Activated CD8-positive, alpha-beta T cell treated with anti-CD3 and anti-CD28 coated beads for 36 hours (primary cell): ENCODE measurements at regions of chr1 and their contacts with region 1.

Region 1: GRCh38 chr1:20640183-20640597 is 6.9 kb downstream of the PINK1 start:
- DNase-seq: peak; percentile 79
- ATAC-seq: peak; percentile 90
- H3K4me3 Mint-ChIP-seq: no peak overlapping the region
- H3K27ac Mint-ChIP-seq: no peak overlapping the region
- H3K4me1 Mint-ChIP-seq: no peaks in the 10 kb centered on the region
- H3K27me3 Mint-ChIP-seq: no peaks in the 10 kb centered on the region
- CTCF ChIP-seq: peak; percentile 80

Region 2: DNA sequence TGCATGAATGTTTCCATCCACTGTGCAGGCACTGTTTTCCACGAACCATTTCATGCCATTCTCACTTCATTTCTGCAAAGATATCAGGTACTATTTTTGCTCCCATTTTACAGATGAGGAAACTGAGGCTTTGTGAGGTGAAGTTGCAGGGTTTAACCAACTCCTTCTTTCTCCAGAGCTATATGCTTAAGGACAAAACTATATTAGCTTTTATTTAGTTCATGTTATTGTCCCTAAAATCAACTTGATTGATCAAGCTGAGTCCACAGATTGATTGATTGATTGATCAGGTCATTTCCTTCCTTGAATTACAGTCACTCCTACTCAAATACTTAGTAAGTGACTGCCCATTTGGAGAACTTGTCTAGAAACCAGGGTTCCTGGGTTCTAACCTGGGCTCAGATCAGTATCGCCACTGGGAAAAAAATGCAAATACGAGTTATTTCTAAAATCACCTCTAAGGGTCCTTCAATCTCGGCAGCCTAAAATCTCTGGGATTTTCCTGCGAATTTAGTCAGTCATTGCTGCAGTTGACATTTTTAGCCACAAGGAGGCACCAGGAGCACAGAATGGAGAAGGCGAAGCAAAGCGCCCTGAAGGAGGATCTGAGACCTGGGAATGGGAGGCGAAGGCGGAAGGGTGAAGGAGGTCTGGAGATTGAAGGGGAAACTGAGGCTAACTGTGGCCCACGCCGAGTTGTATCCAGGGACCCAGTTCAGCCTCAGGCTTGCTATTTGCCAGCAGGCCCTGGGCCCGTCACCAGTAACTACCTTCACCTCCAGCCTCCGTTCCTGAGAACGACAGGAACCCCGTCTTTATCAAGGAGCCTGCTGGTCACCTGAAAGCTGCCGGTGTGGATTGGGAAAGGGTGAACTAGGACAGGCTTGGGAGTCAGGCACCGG is 118.0 kb before region 1 on chr1:
- CTCF ChIA-PET with region 1: interaction called, 22 read pairs
- POLR2A ChIA-PET with region 1: no interaction called
- intact Hi-C with region 1: loop called (anchors 5 kb)
- DNase-seq: peak; percentile 81
- ATAC-seq: peak; percentile 49
- H3K4me3 Mint-ChIP-seq: no peak overlapping the region
- H3K27ac Mint-ChIP-seq: no peak overlapping the region
- H3K4me1 Mint-ChIP-seq: peaks cover 4% of the 10 kb centered on the region
- H3K27me3 Mint-ChIP-seq: peaks cover 22% of the 10 kb centered on the region
- CTCF ChIP-seq: peak; percentile 86

Region 3: GRCh38 chr1:20574686-20575540 is 65.3 kb before region 1 on chr1:
- CTCF ChIA-PET with region 1: interaction called, 10 read pairs
- POLR2A ChIA-PET with region 1: no interaction called
- intact Hi-C with region 1: no loop called
- DNase-seq: peak; percentile 85
- ATAC-seq: peak; percentile 87
- H3K4me3 Mint-ChIP-seq: no peak overlapping the region
- H3K27ac Mint-ChIP-seq: no peak overlapping the region
- H3K4me1 Mint-ChIP-seq: no peaks in the 10 kb centered on the region
- H3K27me3 Mint-ChIP-seq: peaks cover 18% of the 10 kb centered on the region
- CTCF ChIP-seq: peak; percentile 43

Region 4: DNA sequence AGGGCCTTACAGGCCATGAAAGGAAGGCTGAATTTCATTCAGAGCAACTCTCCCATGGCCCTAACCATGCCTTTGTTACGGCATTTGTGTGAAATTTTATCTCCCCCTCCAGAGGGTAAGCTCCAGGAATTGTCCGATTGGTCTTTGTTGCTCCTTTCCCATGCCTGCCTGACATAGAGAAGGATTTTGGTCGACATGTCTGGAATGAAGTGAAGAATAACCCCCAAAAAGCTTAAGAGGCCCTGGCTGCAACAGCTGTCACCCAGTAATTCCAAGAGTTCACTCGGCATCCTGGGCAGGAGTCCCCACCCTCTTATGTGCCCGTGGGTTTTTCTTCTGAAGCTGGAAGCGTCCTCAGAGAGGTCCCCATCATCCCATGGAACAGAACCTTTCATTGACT is 30.6 kb before region 1 on chr1:
- CTCF ChIA-PET with region 1: no interaction called
- POLR2A ChIA-PET with region 1: no interaction called
- intact Hi-C with region 1: no loop called
- DNase-seq: no peak
- ATAC-seq: no peak
- H3K4me3 Mint-ChIP-seq: no peak overlapping the region
- H3K27ac Mint-ChIP-seq: no peak overlapping the region
- H3K4me1 Mint-ChIP-seq: no peaks in the 10 kb centered on the region
- H3K27me3 Mint-ChIP-seq: no peaks in the 10 kb centered on the region
- CTCF ChIP-seq: no peak